Transverse colon (tissue), 4 donors: ENCODE measurements at regions of chr11 and their contacts with region 1.

Region 1: GRCh38 chr11:61679893-61680621 is at the start of gene DAGLA:
- DNase-seq: peak; percentile 74
- H3K4me3 ChIP-seq: peak within 1 kb of the TSS; percentile 35 to 53 (median 48)
- H3K27ac ChIP-seq: peak within 1 kb of the TSS in 3 of 4 donors; percentile 62 to 71 (median 63)
- H3K4me1 ChIP-seq: peaks cover 3 to 49% (median 41%) of the 10 kb centered on the region in 4 donors
- H3K27me3 ChIP-seq: no peaks in the 10 kb centered on the region
- CTCF ChIP-seq: peak; percentile 55 to 99 (median 93)
- EP300 ChIP-seq: no peak
- POLR2A ChIP-seq: no peak
- total RNA-seq, gene DAGLA: 11.9 to 31.4 (median 17.0) TPM

Region 2: DNA sequence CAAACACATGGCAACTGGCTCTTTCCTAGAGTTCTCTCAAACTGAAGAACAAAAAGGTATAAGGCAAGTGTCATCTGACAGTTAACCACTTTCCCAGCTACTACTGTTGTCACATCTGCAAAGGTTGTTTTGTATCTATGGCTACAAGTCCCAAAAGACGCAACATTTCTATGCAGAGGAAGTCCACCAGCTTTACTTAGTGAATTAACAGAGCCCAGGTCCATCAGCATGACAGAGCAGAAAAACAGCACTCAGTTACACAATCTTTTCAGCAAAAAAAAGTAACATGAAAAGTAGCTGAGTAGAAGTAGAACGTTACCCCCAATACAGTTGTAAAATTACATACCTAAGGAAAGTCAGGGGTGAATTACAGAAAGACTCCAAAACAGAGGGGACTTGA is 262.4 kb before region 1 on chr11:
- in situ Hi-C with region 1: no loop called
- intact Hi-C with region 1: no loop called
- DNase-seq: no peak
- H3K4me3 ChIP-seq: no peak overlapping the region
- H3K27ac ChIP-seq: no peak overlapping the region
- H3K4me1 ChIP-seq: peaks cover 0 to 2% (median 0%) of the 10 kb centered on the region in 4 donors
- H3K27me3 ChIP-seq: no peaks in the 10 kb centered on the region
- CTCF ChIP-seq: no peak
- EP300 ChIP-seq: no peak
- POLR2A ChIP-seq: no peak

Region 3: DNA sequence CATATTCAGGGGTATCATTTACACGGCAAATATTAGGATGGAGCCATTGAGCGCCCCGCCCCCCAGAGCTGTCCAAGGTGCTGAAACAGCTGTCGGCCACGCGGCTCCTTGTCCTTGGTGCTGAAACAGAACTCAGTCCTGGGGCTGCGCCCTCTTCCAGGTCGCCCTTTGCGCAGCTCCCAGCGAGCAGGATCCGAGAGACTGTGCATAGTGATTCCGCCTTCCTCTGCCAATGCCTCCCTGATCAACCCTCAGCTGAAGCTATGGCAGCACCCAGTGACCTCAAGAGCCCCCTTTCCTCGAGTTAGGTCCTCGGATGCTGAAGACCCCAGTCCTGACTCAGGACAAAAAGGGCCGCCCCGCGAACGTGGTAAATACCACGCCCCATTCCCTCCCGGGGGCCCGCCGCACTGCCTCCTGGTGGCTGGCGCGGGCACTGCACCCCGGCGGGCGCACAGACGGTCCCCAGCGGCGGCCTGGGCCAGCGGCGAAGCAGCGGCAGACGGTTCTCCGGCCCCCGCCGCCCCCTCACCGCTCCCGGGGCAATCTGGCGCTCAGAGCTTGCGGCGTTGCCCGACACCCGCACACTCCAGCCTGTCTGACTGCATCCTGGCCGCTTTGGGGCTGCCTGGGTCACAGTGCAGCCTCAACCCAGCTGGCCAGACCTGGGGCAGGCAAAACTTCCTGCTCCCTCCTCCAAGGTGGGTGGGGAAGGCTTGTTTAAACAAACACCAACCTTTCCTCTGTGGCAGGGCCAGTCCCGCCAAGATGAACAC is 112.6 kb before region 1 on chr11:
- in situ Hi-C with region 1: no loop called
- intact Hi-C with region 1: no loop called
- DNase-seq: peak; percentile 75
- H3K4me3 ChIP-seq: no peak overlapping the region
- H3K27ac ChIP-seq: no peak overlapping the region
- H3K4me1 ChIP-seq: peaks cover 0 to 8% (median 2%) of the 10 kb centered on the region in 4 donors
- H3K27me3 ChIP-seq: peaks cover 40% of the 10 kb centered on the region
- CTCF ChIP-seq: peak in 4 of 5 experiments; percentile 51 to 77 (median 61)
- EP300 ChIP-seq: no peak
- POLR2A ChIP-seq: no peak

Region 4: GRCh38 chr11:61733120-61733978 is 53.3 kb after region 1 on chr11:
- in situ Hi-C with region 1: loop called in 2 of 4 experiments (anchors 10 kb)
- intact Hi-C with region 1: loop called (anchors 2 kb)
- DNase-seq: peak; percentile 89
- H3K4me3 ChIP-seq: no peak overlapping the region
- H3K27ac ChIP-seq: peak overlapping the region in 2 of 4 donors; percentile 3 to 14
- H3K4me1 ChIP-seq: no peaks in the 10 kb centered on the region
- H3K27me3 ChIP-seq: no peaks in the 10 kb centered on the region
- CTCF ChIP-seq: peak; percentile 98 to 99 (median 99)
- EP300 ChIP-seq: no peak
- POLR2A ChIP-seq: no peak

Region 5: GRCh38 chr11:61769169-61769920 is 89.3 kb after region 1 on chr11:
- in situ Hi-C with region 1: no loop called
- intact Hi-C with region 1: no loop called
- DNase-seq: no peak
- H3K4me3 ChIP-seq: no peak overlapping the region
- H3K27ac ChIP-seq: no peak overlapping the region
- H3K4me1 ChIP-seq: peaks cover 0 to 3% (median 0%) of the 10 kb centered on the region in 4 donors
- H3K27me3 ChIP-seq: no peaks in the 10 kb centered on the region
- CTCF ChIP-seq: no peak
- EP300 ChIP-seq: no peak
- POLR2A ChIP-seq: no peak